B cell (primary cell): ENCODE measurements at regions of chr12 and their contacts with region 1.

Region 1: DNA sequence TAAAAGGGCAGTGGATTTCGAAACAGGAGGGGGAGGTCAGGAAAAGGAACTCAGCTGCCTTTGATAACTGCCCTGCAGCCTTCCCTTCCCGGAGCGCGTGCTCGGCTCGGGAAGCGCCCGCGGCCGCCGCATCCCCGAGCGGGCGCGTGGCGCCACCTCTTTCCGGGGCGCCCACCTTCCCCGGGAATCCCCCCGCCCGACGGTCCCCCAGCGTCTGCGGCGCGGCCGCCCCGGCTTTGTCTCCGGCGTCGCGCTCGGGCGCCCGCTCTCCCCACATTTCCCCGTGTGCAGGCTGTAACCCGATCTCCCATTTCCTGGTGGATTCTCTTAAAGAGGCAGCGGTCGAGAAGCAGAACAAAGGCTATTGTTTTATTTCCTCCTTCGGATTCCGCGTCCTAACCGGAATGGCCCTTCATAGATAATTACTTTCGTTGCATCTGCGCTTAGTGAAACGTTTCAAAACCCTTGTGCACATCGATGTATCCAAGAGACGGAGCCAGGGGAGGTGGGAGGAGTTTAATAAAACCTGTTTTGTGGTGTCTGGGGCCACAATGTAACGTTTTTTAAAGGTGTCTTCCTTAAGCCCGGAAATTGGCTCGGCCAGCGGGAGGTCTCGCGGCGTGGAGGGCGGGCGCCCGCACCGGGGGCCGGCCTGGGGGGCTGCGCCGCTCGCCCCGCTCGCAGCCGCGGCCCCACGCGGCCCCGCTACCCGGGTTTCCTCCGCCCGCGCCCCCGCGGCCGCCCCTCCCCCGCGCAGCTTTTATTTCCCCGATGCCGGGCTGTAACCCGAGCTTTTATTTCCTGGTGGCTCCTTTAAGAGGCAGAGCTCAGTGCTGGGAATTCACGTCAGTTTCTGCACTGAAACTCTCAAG is at the start of gene ETV6:
- DNase-seq: peak; percentile 86
- ATAC-seq: peak; percentile 48
- H3K4me3 ChIP-seq: peak within 1 kb of the TSS; percentile 77 to 96 (median 87)
- H3K4me3 Mint-ChIP-seq: peak within 1 kb of the TSS; percentile 93
- H3K27ac ChIP-seq: peak within 1 kb of the TSS; percentile 72 to 81
- H3K27ac Mint-ChIP-seq: peak within 1 kb of the TSS; percentile 97
- H3K4me1 ChIP-seq: peaks cover 24 to 29% of the 10 kb centered on the region in 2 donors
- H3K4me1 Mint-ChIP-seq: peaks cover 34% of the 10 kb centered on the region
- H3K27me3 ChIP-seq: no peaks in the 10 kb centered on the region
- H3K27me3 Mint-ChIP-seq: no peaks in the 10 kb centered on the region
- CTCF ChIP-seq: no peak
- total RNA-seq, gene ETV6: 123 and 131 TPM in 2 replicates

Region 2: GRCh38 chr12:11581179-11581755 is 67.8 kb before region 1 on chr12:
- CTCF ChIA-PET with region 1: interaction called, 3 read pairs
- POLR2A ChIA-PET with region 1: no interaction called
- intact Hi-C with region 1: loop called (anchors 2 kb)
- DNase-seq: peak; percentile 78
- ATAC-seq: no peak
- H3K4me3 ChIP-seq: no peak overlapping the region
- H3K4me3 Mint-ChIP-seq: no peak overlapping the region
- H3K27ac ChIP-seq: no peak overlapping the region
- H3K27ac Mint-ChIP-seq: no peak overlapping the region
- H3K4me1 ChIP-seq: peaks cover 5 to 11% of the 10 kb centered on the region in 2 donors
- H3K4me1 Mint-ChIP-seq: peaks cover 7% of the 10 kb centered on the region
- H3K27me3 ChIP-seq: no peaks in the 10 kb centered on the region
- H3K27me3 Mint-ChIP-seq: peaks cover 15% of the 10 kb centered on the region
- CTCF ChIP-seq: peak; percentile 86

Region 3: DNA sequence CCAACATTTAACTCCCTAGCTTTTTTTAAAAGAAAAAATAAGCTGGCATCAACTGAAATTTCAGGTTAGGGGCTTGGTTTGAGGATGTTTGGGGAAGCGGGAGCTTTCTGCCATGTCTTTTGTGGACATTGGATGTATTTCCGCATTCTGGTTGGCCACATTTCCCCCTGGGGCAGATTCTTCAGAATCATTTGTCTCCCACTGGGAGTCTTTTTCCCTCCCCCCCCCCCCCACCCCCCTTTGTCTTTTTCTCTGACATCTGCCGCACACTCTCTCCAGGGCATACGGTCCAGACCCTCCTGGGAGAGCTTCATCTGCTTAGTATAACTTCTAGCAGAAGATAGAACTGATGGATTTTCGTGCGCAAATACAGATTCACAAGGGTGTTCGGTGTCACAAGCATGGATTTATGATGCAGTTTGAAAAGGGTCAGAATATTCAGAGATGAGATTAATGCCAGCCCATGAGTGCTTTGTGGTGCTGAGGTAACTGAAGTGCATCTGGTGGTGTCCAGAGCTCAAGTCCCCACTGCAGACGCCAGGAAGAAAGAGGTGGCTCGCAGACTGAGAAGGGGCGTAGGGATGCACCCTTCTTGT is 40.6 kb after region 1 on chr12:
- CTCF ChIA-PET with region 1: no interaction called
- POLR2A ChIA-PET with region 1: no interaction called
- intact Hi-C with region 1: loop called (anchors 5 kb)
- DNase-seq: no peak
- ATAC-seq: no peak
- H3K4me3 ChIP-seq: no peak overlapping the region
- H3K4me3 Mint-ChIP-seq: no peak overlapping the region
- H3K27ac ChIP-seq: no peak overlapping the region
- H3K27ac Mint-ChIP-seq: peak overlapping the region; percentile 2
- H3K4me1 ChIP-seq: peaks cover 5 to 6% of the 10 kb centered on the region in 2 donors
- H3K4me1 Mint-ChIP-seq: peaks cover 55% of the 10 kb centered on the region
- H3K27me3 ChIP-seq: no peaks in the 10 kb centered on the region
- H3K27me3 Mint-ChIP-seq: no peaks in the 10 kb centered on the region
- CTCF ChIP-seq: no peak

Region 4: DNA sequence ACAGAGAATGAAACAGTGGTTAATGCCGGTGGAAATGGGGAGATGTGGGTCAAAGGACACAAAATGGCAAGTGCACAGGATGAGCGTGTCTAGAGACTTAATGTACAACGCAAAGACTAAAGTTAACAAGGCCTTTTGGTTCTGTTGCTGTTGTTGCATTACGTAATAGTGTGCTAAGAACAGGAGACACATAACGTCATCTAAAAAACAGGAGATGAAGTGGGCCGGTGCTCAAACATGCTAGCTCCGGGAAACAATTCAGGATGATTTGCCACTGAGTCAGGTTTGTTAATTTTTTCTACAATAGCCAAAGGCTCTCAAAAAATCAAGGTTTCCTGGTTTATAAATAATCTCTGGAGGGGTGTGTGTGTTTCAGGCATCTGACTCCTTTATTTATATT is 55.9 kb after region 1 on chr12:
- CTCF ChIA-PET with region 1: no interaction called
- POLR2A ChIA-PET with region 1: no interaction called
- intact Hi-C with region 1: no loop called
- DNase-seq: no peak
- ATAC-seq: no peak
- H3K4me3 ChIP-seq: no peak overlapping the region
- H3K4me3 Mint-ChIP-seq: no peak overlapping the region
- H3K27ac ChIP-seq: no peak overlapping the region
- H3K27ac Mint-ChIP-seq: no peak overlapping the region
- H3K4me1 ChIP-seq: no peaks in the 10 kb centered on the region
- H3K4me1 Mint-ChIP-seq: peaks cover 23% of the 10 kb centered on the region
- H3K27me3 ChIP-seq: no peaks in the 10 kb centered on the region
- H3K27me3 Mint-ChIP-seq: no peaks in the 10 kb centered on the region
- CTCF ChIP-seq: no peak

Region 5: GRCh38 chr12:11746024-11746771 is 97.1 kb after region 1 on chr12:
- CTCF ChIA-PET with region 1: interaction called, 3 read pairs
- POLR2A ChIA-PET with region 1: interaction called, 7 read pairs
- intact Hi-C with region 1: loop called (anchors 5 kb)
- DNase-seq: peak; percentile 84
- ATAC-seq: peak; percentile 67
- H3K4me3 ChIP-seq: peak overlapping the region in 2 of 5 experiments; percentile 3 to 13
- H3K4me3 Mint-ChIP-seq: peak overlapping the region; percentile 68
- H3K27ac ChIP-seq: peak overlapping the region; percentile 19 to 71
- H3K27ac Mint-ChIP-seq: peak overlapping the region; percentile 89
- H3K4me1 ChIP-seq: peaks cover 65 to 80% of the 10 kb centered on the region in 2 donors
- H3K4me1 Mint-ChIP-seq: peaks cover 83% of the 10 kb centered on the region
- H3K27me3 ChIP-seq: no peaks in the 10 kb centered on the region
- H3K27me3 Mint-ChIP-seq: no peaks in the 10 kb centered on the region
- CTCF ChIP-seq: no peak

Region 6: DNA sequence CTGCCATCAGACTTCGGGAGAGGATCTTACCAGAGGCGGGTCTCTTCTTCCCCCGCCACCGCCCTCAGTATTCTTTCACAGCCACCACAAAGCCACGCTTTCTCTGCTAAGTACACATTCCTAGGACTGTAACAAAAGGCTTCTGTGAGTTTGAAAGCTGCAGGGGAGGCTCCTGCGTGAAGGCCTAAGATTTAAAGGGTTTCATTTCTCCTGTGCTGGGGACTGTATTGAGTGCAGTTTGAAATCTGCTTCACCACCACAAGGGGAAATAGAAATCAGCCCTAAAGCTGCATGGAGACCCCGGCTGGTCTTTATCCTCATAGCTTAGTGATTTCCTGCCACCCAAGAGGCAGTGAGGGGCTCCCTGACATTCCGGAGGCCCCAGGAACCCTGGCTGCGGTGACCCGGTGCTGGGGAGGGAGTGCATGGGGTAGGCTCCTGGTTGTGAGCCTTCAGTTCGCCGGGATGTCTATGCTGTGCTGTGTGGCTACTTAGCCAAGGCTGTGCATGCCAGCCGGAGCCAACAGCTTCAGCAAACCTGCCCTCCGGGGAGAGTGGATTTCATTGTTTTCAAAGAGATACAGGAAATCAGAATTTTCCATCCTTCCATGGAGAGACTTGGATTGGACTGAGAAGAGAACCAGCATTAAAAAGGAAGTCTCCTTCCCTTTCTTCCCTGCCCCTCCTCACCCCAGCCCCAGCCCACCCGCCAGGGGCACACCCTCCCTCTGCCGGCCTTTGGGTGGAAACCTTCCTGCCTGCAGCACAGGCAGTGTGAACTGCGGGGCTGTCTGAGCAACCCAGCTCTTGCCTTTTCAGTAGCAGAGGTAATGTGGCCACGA is 163.7 kb after region 1 on chr12:
- CTCF ChIA-PET with region 1: interaction called, 4 read pairs
- POLR2A ChIA-PET with region 1: no interaction called
- intact Hi-C with region 1: loop called (anchors 2 kb)
- DNase-seq: peak; percentile 70
- ATAC-seq: peak; percentile 82
- H3K4me3 ChIP-seq: peak overlapping the region; percentile 35 to 64 (median 52)
- H3K4me3 Mint-ChIP-seq: peak overlapping the region; percentile 35
- H3K27ac ChIP-seq: peak overlapping the region; percentile 54 to 80
- H3K27ac Mint-ChIP-seq: peak overlapping the region; percentile 78
- H3K4me1 ChIP-seq: peaks cover 34 to 37% of the 10 kb centered on the region in 2 donors
- H3K4me1 Mint-ChIP-seq: peaks cover 53% of the 10 kb centered on the region
- H3K27me3 ChIP-seq: no peaks in the 10 kb centered on the region
- H3K27me3 Mint-ChIP-seq: no peaks in the 10 kb centered on the region
- CTCF ChIP-seq: peak; percentile 36

Region 7: GRCh38 chr12:11891754-11892386 is 242.8 kb after region 1 on chr12:
- CTCF ChIA-PET with region 1: interaction called, 3 read pairs
- POLR2A ChIA-PET with region 1: no interaction called
- intact Hi-C with region 1: loop called (anchors 5 kb)
- DNase-seq: no peak
- ATAC-seq: no peak
- H3K4me3 ChIP-seq: no peak overlapping the region
- H3K4me3 Mint-ChIP-seq: peak overlapping the region; percentile 27
- H3K27ac ChIP-seq: no peak overlapping the region
- H3K27ac Mint-ChIP-seq: no peak overlapping the region
- H3K4me1 ChIP-seq: peaks cover 16 to 23% of the 10 kb centered on the region in 2 donors
- H3K4me1 Mint-ChIP-seq: peaks cover 42% of the 10 kb centered on the region
- H3K27me3 ChIP-seq: no peaks in the 10 kb centered on the region
- H3K27me3 Mint-ChIP-seq: no peaks in the 10 kb centered on the region
- CTCF ChIP-seq: no peak

Region 8: DNA sequence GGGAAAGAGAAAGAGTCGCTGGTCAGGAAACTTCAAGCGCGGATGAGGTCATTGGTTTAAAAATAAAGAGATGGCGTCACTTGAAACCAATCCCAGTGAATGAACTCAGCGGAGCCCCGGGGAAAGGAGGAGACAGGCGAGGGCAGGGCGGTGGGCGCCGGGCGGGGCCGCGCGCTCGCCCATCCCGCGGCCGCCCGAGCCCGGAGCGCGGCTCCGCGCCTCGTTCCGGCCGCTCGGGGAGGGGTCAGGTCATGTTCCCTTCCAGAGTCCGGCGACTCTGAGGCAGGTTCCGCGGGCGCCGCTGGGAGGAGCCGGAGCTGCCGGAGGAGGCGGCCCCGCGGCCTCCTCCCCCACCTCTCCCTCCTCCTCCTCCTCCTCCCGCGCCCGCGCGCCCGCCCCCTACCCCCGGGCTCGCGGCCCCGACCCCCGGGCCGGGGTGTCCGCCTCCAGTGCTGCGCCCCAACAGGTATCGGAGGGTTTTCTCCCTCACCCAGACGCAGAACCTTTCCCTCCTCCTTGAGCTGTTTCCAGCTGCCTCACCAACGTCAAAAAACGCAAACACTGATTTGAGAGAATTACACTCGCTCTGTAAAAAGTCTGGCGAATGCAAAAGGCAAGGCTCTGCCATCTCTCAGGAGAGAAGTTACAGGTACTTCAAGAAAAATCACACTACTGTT is 913.7 kb after region 1 on chr12 and contains the start of gene DUSP16:
- CTCF ChIA-PET with region 1: no interaction called
- POLR2A ChIA-PET with region 1: no interaction called
- intact Hi-C with region 1: loop called (anchors 5 kb)
- DNase-seq: peak; percentile 90
- ATAC-seq: peak; percentile 70
- H3K4me3 ChIP-seq: peak within 1 kb of the TSS; percentile 55 to 78 (median 72)
- H3K4me3 Mint-ChIP-seq: peak within 1 kb of the TSS; percentile 95
- H3K27ac ChIP-seq: peak within 1 kb of the TSS; percentile 38 to 82
- H3K27ac Mint-ChIP-seq: peak within 1 kb of the TSS; percentile 92
- H3K4me1 ChIP-seq: peaks cover 17 to 18% of the 10 kb centered on the region in 2 donors
- H3K4me1 Mint-ChIP-seq: peaks cover 20% of the 10 kb centered on the region
- H3K27me3 ChIP-seq: peaks cover 0 to 9% (median 3%) of the 10 kb centered on the region in 4 experiments
- H3K27me3 Mint-ChIP-seq: peaks cover 8% of the 10 kb centered on the region
- CTCF ChIP-seq: no peak
- total RNA-seq, gene DUSP16: 5.6 and 5.9 TPM in 2 replicates